ENCODE measurements at regions of chr13 and their contacts with region 1.

Region 1: GRCh38 chr13:112643759-112644459 is 45.9 kb upstream of the ATP11A start:
- DNase-seq: peak; percentile 85 to 96 (median 94)
- ATAC-seq: peak; percentile 85
- H3K4me3 ChIP-seq: no peak overlapping the region
- H3K27ac ChIP-seq: peak overlapping the region in 3 of 4 donors; percentile 39 to 43 (median 39)
- H3K4me1 ChIP-seq: peaks cover 29% of the 10 kb centered on the region
- H3K27me3 ChIP-seq: no peaks in the 10 kb centered on the region
- CTCF ChIP-seq: no peak
- POLR2A ChIP-seq: peak in 1 of 3 donors; percentile 17

Region 2: GRCh38 chr13:112873851-112874750 is 230.2 kb after region 1 on chr13:
- intact Hi-C with region 1: loop called (anchors 10 kb)
- DNase-seq: peak; percentile 75 to 87 (median 78)
- ATAC-seq: peak; percentile 91
- H3K4me3 ChIP-seq: no peak overlapping the region
- H3K27ac ChIP-seq: peak overlapping the region in 1 of 4 donors; percentile 24
- H3K4me1 ChIP-seq: no peaks in the 10 kb centered on the region
- H3K27me3 ChIP-seq: no peaks in the 10 kb centered on the region
- CTCF ChIP-seq: peak; percentile 76 to 86 (median 81)
- POLR2A ChIP-seq: no peak

Measured in body of pancreas (tissue), 4 donors.